Aorta (tissue), 5 donors: ENCODE measurements at regions of chr15 and their contacts with region 1.

Region 1: DNA sequence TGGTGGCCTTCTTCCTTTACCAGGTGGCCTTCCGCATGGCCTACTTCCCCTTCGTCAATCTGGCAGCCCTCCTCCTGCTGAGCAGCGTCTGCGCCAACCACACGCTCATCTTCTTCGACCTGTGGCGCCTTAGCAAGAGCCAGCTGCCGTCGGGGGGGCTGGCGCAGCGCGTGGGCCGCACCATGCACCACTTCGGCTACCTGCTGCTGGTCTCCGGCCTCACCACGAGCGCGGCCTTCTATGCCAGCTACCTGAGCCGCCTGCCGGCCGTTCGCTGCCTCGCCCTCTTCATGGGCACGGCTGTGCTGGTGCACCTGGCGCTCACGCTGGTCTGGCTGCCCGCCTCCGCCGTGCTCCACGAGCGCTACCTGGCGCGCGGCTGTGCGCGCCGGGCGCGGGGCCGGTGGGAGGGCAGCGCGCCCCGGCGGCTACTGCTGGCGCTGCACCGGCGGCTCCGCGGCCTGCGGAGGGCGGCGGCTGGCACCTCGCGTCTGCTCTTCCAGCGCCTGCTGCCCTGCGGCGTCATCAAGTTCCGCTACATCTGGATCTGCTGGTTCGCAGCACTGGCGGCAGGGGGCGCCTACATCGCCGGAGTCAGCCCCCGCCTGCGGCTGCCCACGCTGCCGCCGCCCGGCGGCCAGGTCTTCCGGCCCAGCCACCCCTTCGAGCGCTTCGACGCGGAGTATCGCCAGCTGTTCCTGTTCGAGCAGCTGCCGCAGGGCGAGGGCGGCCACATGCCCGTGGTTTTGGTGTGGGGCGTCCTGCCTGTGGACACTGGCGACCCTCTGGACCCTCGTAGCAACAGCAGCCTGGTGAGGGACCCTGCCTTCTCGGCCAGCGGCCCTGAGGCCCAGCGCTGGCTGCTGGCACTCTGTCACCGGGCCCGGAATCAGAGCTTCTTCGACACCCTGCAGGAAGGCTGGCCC is 9.9 kb downstream of the DISP2 start:
- DNase-seq: peak; percentile 91 to 94
- ATAC-seq: peak; percentile 90
- H3K4me3 ChIP-seq: no peak overlapping the region
- H3K27ac ChIP-seq: no peak overlapping the region
- H3K4me1 ChIP-seq: no peaks in the 10 kb centered on the region
- H3K27me3 ChIP-seq: no peaks in the 10 kb centered on the region

Region 2: GRCh38 chr15:40323239-40323952 is 44.6 kb before region 1 on chr15 and contains the start of gene INAFM2:
- intact Hi-C with region 1: loop called in 1 of 2 experiments (anchors 5 kb)
- DNase-seq: peak; percentile 96 to 97
- ATAC-seq: peak; percentile 92
- H3K4me3 ChIP-seq: peak within 1 kb of the TSS; percentile 96 to 97
- H3K27ac ChIP-seq: peak within 1 kb of the TSS; percentile 91 to 95
- H3K4me1 ChIP-seq: peaks cover 0 to 5% of the 10 kb centered on the region in 2 donors
- H3K27me3 ChIP-seq: no peaks in the 10 kb centered on the region
- total RNA-seq, gene INAFM2: 59.4 to 70.0 TPM

Region 3: GRCh38 chr15:40405501-40406381 is 37.8 kb after region 1 on chr15 and contains the start of gene IVD:
- intact Hi-C with region 1: loop called in 1 of 2 experiments (anchors 5 kb)
- DNase-seq: peak; percentile 98
- ATAC-seq: peak; percentile 99
- H3K4me3 ChIP-seq: peak within 1 kb of the TSS; percentile 84 to 92
- H3K27ac ChIP-seq: peak within 1 kb of the TSS in 1 of 2 donors; percentile 2
- H3K4me1 ChIP-seq: no peaks in the 10 kb centered on the region
- H3K27me3 ChIP-seq: no peaks in the 10 kb centered on the region
- total RNA-seq, gene IVD: 41.7 to 63.0 TPM